CD8-positive, alpha-beta T cell (primary cell): ENCODE measurements at regions of chr19 and their contacts with region 1.

Region 1: DNA sequence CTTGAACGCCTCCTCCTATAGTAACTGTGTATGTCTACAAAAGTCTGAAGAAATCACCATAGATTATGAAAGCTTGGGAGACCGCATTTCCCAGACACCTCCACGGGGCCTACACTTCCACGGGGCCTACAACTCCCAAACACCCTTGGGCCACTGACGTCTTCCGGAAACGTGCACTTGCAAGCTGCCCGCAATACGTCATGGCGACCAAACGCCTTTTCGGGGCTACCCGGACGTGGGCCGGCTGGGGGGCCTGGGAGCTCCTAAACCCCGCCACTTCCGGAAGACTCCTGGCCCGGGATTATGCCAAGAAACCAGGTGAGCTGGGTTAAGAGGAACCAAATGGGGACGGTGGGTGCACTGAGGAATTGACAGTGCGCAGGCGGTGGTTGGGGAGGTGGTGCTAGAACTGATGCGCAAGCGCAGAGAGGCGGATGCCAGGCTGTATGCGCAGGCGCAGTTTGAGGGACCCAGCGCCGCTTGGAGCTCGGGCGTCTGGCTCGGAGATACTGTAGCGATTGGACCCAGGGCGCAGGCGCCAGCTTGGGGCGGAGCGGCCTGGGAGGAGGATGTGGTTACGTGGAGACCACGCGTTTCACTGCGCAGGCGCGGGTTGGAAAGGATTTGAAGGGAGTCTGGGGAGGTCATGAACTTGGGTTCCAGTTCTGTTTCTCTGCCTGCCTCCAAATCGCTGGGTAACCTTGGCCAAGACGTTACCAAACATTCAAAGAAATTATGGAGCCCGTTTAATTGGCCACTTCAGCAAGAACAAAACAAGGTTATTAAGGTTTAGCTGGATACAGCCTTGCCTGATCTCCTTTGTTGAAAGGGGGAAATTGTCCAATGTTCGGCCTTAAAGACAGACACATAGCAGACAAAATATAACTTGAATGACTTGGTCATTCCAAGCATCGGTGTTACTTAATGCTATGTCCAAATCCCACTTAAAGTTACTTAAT is at the start of gene MRPL54:
- DNase-seq: peak; percentile 98 to 100 (median 99)
- ATAC-seq: peak; percentile 79
- H3K4me3 ChIP-seq: peak within 1 kb of the TSS; percentile 80 to 90
- H3K4me3 Mint-ChIP-seq: peak within 1 kb of the TSS; percentile 95
- H3K27ac ChIP-seq: peak within 1 kb of the TSS; percentile 98 to 99
- H3K27ac Mint-ChIP-seq: peak within 1 kb of the TSS; percentile 100
- H3K4me1 ChIP-seq: peaks cover 46% of the 10 kb centered on the region
- H3K4me1 Mint-ChIP-seq: peaks cover 47% of the 10 kb centered on the region
- H3K27me3 ChIP-seq: no peaks in the 10 kb centered on the region
- H3K27me3 Mint-ChIP-seq: no peaks in the 10 kb centered on the region
- CTCF ChIP-seq: no peak
- total RNA-seq, gene MRPL54: 72.5 to 78.0 TPM

Region 2: GRCh38 chr19:3275583-3276340 is 487.0 kb before region 1 on chr19:
- CTCF ChIA-PET with region 1: no interaction called
- POLR2A ChIA-PET with region 1: no interaction called
- intact Hi-C with region 1: loop called in 1 of 2 experiments (anchors 5 kb)
- DNase-seq: peak; percentile 84 to 98 (median 93)
- ATAC-seq: peak; percentile 79
- H3K4me3 ChIP-seq: peak overlapping the region; percentile 59 to 84
- H3K4me3 Mint-ChIP-seq: peak overlapping the region; percentile 86
- H3K27ac ChIP-seq: peak overlapping the region; percentile 34 to 63
- H3K27ac Mint-ChIP-seq: peak overlapping the region; percentile 70
- H3K4me1 ChIP-seq: peaks cover 18% of the 10 kb centered on the region
- H3K4me1 Mint-ChIP-seq: peaks cover 17% of the 10 kb centered on the region
- H3K27me3 ChIP-seq: peaks cover 0 to 2% of the 10 kb centered on the region in 2 experiments
- H3K27me3 Mint-ChIP-seq: peaks cover 6% of the 10 kb centered on the region
- CTCF ChIP-seq: peak; percentile 14

Region 3: DNA sequence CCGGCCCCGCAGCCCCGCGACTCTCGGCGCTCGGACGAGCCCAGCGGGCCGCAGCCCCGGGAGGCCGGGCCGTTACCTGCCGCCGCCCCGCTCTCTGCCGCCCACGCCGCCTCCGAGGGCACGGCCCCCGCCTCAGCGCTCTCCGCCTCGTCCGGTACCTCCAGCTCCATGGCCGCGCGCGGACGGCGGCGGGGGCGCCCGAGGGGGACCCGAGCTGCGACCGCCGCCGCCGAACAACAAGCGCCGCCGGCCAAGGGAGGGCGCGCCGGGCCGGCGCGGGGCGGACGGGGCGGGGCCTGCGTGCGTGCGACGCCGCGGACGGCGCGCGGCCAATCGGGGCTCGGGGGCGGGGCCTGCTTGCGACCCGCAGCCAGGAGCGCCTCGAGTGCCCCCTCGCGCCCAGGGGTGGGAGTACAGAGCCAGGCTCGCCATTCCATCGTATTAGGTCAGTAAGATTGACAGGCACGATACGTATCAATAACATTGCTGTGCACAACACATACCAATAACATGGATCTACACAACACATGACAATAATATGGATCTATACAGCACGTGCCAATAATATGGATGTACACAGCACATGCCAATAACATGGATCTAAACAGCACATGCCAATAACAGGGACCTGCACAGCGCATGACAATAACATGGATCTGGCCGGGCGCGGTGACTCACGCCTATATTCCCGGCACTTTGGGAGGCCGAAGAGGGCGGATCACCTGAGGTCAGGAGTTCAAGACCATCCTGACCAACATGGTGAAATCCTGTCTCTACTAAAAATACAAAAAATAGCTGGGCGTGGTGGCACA is 62.4 kb before region 1 on chr19 and contains the start of gene PIP5K1C:
- CTCF ChIA-PET with region 1: interaction called, 3 read pairs
- POLR2A ChIA-PET with region 1: no interaction called
- intact Hi-C with region 1: loop called (anchors 1 kb)
- DNase-seq: peak; percentile 84 to 97 (median 92)
- ATAC-seq: peak; percentile 100
- H3K4me3 ChIP-seq: peak within 1 kb of the TSS; percentile 61 to 63
- H3K4me3 Mint-ChIP-seq: peak within 1 kb of the TSS; percentile 88
- H3K27ac ChIP-seq: no peak within 1 kb of the TSS
- H3K27ac Mint-ChIP-seq: peak within 1 kb of the TSS; percentile 81
- H3K4me1 ChIP-seq: peaks cover 19% of the 10 kb centered on the region
- H3K4me1 Mint-ChIP-seq: peaks cover 29% of the 10 kb centered on the region
- H3K27me3 ChIP-seq: no peaks in the 10 kb centered on the region
- H3K27me3 Mint-ChIP-seq: peaks cover 1% of the 10 kb centered on the region
- CTCF ChIP-seq: peak; percentile 82
- total RNA-seq, gene PIP5K1C: 11.4 to 12.2 TPM

Region 4: GRCh38 chr19:3821857-3822364 is 59.1 kb after region 1 on chr19:
- CTCF ChIA-PET with region 1: interaction called, 35 read pairs
- POLR2A ChIA-PET with region 1: interaction called, 30 read pairs
- intact Hi-C with region 1: loop called (anchors 1 kb)
- DNase-seq: peak; percentile 84 to 98 (median 87)
- ATAC-seq: peak; percentile 99
- H3K4me3 ChIP-seq: peak overlapping the region in 1 of 2 experiments; percentile 30
- H3K4me3 Mint-ChIP-seq: peak overlapping the region; percentile 35
- H3K27ac ChIP-seq: no peak overlapping the region
- H3K27ac Mint-ChIP-seq: peak overlapping the region; percentile 64
- H3K4me1 ChIP-seq: peaks cover 32% of the 10 kb centered on the region
- H3K4me1 Mint-ChIP-seq: peaks cover 17% of the 10 kb centered on the region
- H3K27me3 ChIP-seq: no peaks in the 10 kb centered on the region
- H3K27me3 Mint-ChIP-seq: no peaks in the 10 kb centered on the region
- CTCF ChIP-seq: peak; percentile 98

Region 5: GRCh38 chr19:4059453-4060288 is 296.9 kb after region 1 on chr19:
- CTCF ChIA-PET with region 1: no interaction called
- POLR2A ChIA-PET with region 1: no interaction called
- intact Hi-C with region 1: no loop called
- DNase-seq: peak in 8 of 9 experiments; percentile 60 to 91 (median 74)
- ATAC-seq: peak; percentile 59
- H3K4me3 ChIP-seq: peak overlapping the region; percentile 35 to 44
- H3K4me3 Mint-ChIP-seq: peak overlapping the region; percentile 53
- H3K27ac ChIP-seq: peak overlapping the region; percentile 47 to 94
- H3K27ac Mint-ChIP-seq: peak overlapping the region; percentile 91
- H3K4me1 ChIP-seq: peaks cover 68% of the 10 kb centered on the region
- H3K4me1 Mint-ChIP-seq: peaks cover 40% of the 10 kb centered on the region
- H3K27me3 ChIP-seq: no peaks in the 10 kb centered on the region
- H3K27me3 Mint-ChIP-seq: no peaks in the 10 kb centered on the region
- CTCF ChIP-seq: no peak

Region 6: GRCh38 chr19:4182084-4182810 is 419.5 kb after region 1 on chr19 and contains the starts of genes ANKRD24 and SIRT6:
- CTCF ChIA-PET with region 1: no interaction called
- POLR2A ChIA-PET with region 1: no interaction called
- intact Hi-C with region 1: loop called in 1 of 2 experiments (anchors 5 kb)
- DNase-seq: peak; percentile 91 to 98 (median 97)
- ATAC-seq: peak; percentile 88
- H3K4me3 ChIP-seq: peak within 1 kb of the TSS; percentile 79 to 95
- H3K4me3 Mint-ChIP-seq: peak within 1 kb of the TSS; percentile 98
- H3K27ac ChIP-seq: peak within 1 kb of the TSS; percentile 74 to 76
- H3K27ac Mint-ChIP-seq: peak within 1 kb of the TSS; percentile 93
- H3K4me1 ChIP-seq: peaks cover 28% of the 10 kb centered on the region
- H3K4me1 Mint-ChIP-seq: peaks cover 31% of the 10 kb centered on the region
- H3K27me3 ChIP-seq: no peaks in the 10 kb centered on the region
- H3K27me3 Mint-ChIP-seq: peaks cover 2% of the 10 kb centered on the region
- CTCF ChIP-seq: no peak
- total RNA-seq, gene ANKRD24: 0.83 to 1.2 TPM
- total RNA-seq, gene SIRT6: 12.0 to 13.0 TPM

Region 7: DNA sequence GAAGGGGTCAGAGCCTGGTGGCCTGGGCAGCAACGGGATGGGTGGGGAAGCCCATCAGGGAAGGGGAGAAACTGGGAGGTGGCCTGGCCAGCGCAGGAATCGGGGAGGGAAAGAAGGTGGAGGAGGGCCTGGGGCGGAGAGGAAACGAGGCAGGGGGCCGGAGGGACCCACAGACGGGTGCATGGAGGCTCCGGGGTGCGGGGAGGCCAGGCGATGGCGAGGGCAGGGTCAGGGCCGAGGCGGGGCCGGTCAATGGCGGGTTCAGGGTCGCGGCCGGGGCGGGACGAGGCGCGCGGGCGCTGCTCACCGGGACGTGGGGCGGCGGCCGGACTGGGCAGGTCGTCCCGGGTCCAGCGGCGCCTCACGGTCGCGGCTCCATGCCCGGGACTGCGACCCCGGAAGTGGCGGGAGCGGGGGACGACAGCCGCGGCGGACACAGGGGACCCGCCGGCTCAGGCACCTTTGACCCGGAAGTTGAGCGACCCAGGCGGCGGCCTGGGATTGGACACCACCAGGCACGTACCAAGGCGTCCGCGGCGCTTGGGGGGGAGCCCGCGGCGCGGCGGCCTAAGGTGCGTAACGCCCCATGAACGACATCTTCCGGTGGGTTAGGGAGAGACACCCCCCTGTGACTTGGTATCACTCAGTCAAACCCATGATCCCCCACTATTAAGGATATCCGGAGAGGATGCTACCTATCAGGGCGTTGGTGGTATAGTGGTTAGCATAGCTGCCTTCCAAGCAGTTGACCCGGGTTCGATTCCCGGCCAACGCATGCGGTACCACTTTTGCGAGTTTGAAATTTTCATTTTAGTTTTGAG is 960.8 kb after region 1 on chr19 and contains the start of gene DPP9:
- CTCF ChIA-PET with region 1: no interaction called
- POLR2A ChIA-PET with region 1: no interaction called
- intact Hi-C with region 1: loop called in 1 of 2 experiments (anchors 10 kb)
- DNase-seq: peak; percentile 93 to 99 (median 96)
- ATAC-seq: peak; percentile 94
- H3K4me3 ChIP-seq: peak within 1 kb of the TSS; percentile 76 to 78
- H3K4me3 Mint-ChIP-seq: peak within 1 kb of the TSS; percentile 93
- H3K27ac ChIP-seq: peak within 1 kb of the TSS; percentile 78 to 79
- H3K27ac Mint-ChIP-seq: peak within 1 kb of the TSS; percentile 97
- H3K4me1 ChIP-seq: peaks cover 31% of the 10 kb centered on the region
- H3K4me1 Mint-ChIP-seq: peaks cover 32% of the 10 kb centered on the region
- H3K27me3 ChIP-seq: no peaks in the 10 kb centered on the region
- H3K27me3 Mint-ChIP-seq: no peaks in the 10 kb centered on the region
- CTCF ChIP-seq: no peak
- total RNA-seq, gene DPP9: 85.5 to 86.6 TPM